Mammary epithelial cell (primary cell): ENCODE measurements at regions of chr9 and their contacts with region 1.

Region 1: DNA sequence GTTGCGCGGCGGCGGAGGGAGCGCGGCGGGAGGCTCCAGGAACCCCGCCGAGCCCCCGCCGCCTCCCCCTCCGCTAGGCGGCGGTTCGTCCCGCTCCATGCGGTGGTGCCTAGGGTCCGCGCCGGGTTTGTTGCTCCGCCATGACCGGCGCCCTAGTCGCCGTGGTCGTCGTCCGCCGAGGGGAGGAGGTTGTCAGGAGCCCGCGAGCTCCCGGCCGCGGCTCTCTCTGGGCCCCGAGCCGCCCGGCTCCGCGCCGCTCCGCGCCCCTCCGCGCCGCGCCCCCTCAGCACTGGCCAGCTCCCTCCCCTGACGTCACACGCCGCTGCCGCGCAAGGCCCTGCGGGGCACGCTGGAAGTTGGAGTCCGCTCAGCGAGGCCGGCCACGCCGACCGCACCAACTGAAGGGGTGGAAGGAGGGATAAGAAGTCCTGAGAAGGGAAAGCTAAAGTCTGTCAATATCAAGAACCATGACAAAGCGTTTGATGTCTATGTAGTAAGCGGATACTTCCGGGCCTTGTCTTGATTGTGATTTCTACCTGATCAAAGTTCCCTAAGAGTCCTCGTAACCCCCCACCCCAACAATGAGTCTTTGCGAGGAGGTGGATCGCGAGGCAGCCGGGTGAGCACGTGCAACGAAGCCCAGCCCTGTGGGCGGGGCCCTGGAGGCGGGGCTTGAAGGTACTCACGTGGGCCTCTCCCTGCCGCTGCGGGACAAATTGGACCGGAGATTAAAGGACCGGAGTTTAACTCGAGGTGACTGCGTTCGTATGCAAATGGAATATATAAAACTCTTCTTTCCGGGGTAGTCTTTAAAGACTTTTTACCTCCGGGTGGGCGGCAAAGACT is at the start of gene NR6A1:
- DNase-seq: peak; percentile 95
- H3K4me3 ChIP-seq: peak within 1 kb of the TSS; percentile 80 to 96 (median 85)
- H3K27ac ChIP-seq: peak within 1 kb of the TSS; percentile 87
- H3K4me1 ChIP-seq: peaks cover 10% of the 10 kb centered on the region
- H3K27me3 ChIP-seq: no peaks in the 10 kb centered on the region
- CTCF ChIP-seq: peak in 1 of 2 donors; percentile 42
- total RNA-seq, gene NR6A1: 3.2 to 4.8 TPM

Region 2: DNA sequence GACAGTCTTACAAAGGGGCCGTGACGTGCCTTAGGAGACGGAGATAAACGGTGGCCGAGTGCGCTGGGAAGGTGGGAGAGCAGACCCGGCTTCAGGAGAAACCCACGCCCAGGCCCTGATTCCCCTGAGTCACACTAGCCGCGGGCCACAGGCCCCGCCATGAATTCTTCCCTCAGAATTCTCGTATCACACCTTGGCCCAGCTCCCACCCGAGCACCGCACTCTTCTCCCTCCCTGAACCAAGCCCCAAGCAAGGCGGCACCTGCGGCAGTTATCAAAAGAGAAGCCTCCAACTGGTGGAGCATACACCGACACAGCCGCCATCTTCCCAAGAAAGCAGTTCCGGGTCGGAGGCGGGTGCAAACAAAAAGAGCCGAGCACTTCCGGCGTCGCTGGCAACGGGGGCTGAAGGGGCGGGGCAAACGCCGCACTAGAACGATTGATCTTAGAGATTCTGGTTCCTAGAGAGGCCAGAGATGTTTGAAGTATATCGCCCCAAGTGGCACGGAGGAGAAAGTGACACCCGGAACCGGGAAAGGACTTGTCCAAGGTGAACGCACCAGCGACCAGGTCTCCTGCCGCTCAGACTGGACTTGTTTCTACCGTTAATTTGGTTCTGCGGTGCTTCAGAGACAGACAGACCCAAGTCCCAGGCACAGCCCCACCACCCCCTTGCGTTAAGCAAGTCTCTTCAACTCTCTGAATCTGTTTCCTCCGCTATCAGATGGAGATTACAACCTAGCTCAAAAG is 356.0 kb before region 1 on chr9 and contains the start of gene PSMB7:
- CTCF ChIA-PET with region 1: no interaction called
- dilution Hi-C with region 1: no loop called
- in situ Hi-C with region 1: no loop called
- intact Hi-C with region 1: no loop called
- DNase-seq: peak; percentile 90
- H3K4me3 ChIP-seq: peak within 1 kb of the TSS; percentile 60 to 82 (median 77)
- H3K27ac ChIP-seq: peak within 1 kb of the TSS; percentile 77
- H3K4me1 ChIP-seq: peaks cover 38% of the 10 kb centered on the region
- H3K27me3 ChIP-seq: no peaks in the 10 kb centered on the region
- CTCF ChIP-seq: peak; percentile 68 to 84
- total RNA-seq, gene PSMB7: 124 to 213 TPM

Region 3: GRCh38 chr9:124658165-124659017 is 112.9 kb before region 1 on chr9:
- CTCF ChIA-PET with region 1: interaction called, 6 read pairs
- dilution Hi-C with region 1: no loop called
- in situ Hi-C with region 1: no loop called
- intact Hi-C with region 1: loop called (anchors 5 kb)
- DNase-seq: peak; percentile 94
- H3K4me3 ChIP-seq: peak overlapping the region; percentile 49 to 95 (median 73)
- H3K27ac ChIP-seq: peak overlapping the region; percentile 95
- H3K4me1 ChIP-seq: peaks cover 17% of the 10 kb centered on the region
- H3K27me3 ChIP-seq: no peaks in the 10 kb centered on the region
- CTCF ChIP-seq: no peak

Region 4: GRCh38 chr9:124818431-124819281 is 47.4 kb after region 1 on chr9:
- CTCF ChIA-PET with region 1: interaction called, 5 read pairs
- dilution Hi-C with region 1: no loop called
- in situ Hi-C with region 1: no loop called
- intact Hi-C with region 1: loop called (anchors 1 kb)
- DNase-seq: peak; percentile 96
- H3K4me3 ChIP-seq: peak overlapping the region in 1 of 3 experiments; percentile 0
- H3K27ac ChIP-seq: peak overlapping the region; percentile 61
- H3K4me1 ChIP-seq: peaks cover 41% of the 10 kb centered on the region
- H3K27me3 ChIP-seq: no peaks in the 10 kb centered on the region
- CTCF ChIP-seq: peak in 1 of 2 donors; percentile 15

Region 5: DNA sequence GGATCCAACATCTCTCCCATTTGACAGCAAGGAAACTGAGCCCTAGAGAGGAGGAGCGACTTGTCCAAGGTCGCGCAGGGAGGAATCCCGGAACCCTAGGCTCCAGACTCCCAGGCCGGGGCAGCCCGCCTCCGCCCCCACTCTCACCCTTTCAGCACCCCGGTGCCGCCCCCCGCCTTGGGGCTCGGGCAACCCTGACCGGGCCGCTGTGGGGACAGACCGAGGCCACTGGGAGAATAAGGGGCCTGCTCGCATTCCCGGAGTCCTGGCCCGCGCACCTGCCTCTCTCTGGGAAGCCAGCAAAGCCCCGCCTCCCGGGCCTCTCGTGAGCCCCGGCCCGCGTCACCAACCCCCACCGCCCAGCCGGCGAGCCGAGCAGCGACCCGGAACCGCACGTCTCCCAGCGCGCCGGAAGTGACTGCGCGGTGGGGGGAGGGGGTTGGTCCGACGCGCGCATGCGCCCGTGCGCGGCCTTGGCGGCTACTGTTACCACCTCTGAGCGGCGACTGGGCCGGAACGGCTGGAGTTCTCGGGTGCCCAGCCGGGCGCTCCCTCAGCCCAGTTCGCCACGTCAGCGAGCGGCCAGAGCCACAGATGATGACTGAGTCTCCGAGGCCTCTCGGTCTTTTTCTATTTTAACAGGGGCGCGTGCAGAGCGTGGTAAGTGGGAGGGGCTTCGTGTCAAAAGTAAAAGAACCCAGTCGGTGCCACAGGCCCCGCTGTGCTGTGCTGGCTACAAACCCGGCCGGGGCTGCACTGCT is 169.6 kb after region 1 on chr9 and contains the start of gene GOLGA1:
- CTCF ChIA-PET with region 1: no interaction called
- dilution Hi-C with region 1: no loop called
- in situ Hi-C with region 1: no loop called
- intact Hi-C with region 1: loop called (anchors 5 kb)
- DNase-seq: peak; percentile 95
- H3K4me3 ChIP-seq: peak within 1 kb of the TSS; percentile 86 to 100 (median 88)
- H3K27ac ChIP-seq: peak within 1 kb of the TSS; percentile 87
- H3K4me1 ChIP-seq: peaks cover 11% of the 10 kb centered on the region
- H3K27me3 ChIP-seq: no peaks in the 10 kb centered on the region
- CTCF ChIP-seq: no peak
- total RNA-seq, gene GOLGA1: 11.5 to 17.6 TPM

Region 6: GRCh38 chr9:125374443-125375309 is 603.4 kb after region 1 on chr9:
- CTCF ChIA-PET with region 1: no interaction called
- dilution Hi-C with region 1: loop called (anchors 10 kb)
- in situ Hi-C with region 1: loop called in 1 of 2 experiments (anchors 10 kb)
- intact Hi-C with region 1: loop called (anchors 1 kb)
- DNase-seq: peak; percentile 37
- H3K4me3 ChIP-seq: peak overlapping the region; percentile 18 to 50 (median 35)
- H3K27ac ChIP-seq: no peak overlapping the region
- H3K4me1 ChIP-seq: no peaks in the 10 kb centered on the region
- H3K27me3 ChIP-seq: no peaks in the 10 kb centered on the region
- CTCF ChIP-seq: peak; percentile 59 to 86